Activated CD4-positive, alpha-beta T cell treated with anti-CD3 and anti-CD28 coated beads for 36 hours (primary cell): ENCODE measurements at regions of chr6 and their contacts with region 1.

Region 1: DNA sequence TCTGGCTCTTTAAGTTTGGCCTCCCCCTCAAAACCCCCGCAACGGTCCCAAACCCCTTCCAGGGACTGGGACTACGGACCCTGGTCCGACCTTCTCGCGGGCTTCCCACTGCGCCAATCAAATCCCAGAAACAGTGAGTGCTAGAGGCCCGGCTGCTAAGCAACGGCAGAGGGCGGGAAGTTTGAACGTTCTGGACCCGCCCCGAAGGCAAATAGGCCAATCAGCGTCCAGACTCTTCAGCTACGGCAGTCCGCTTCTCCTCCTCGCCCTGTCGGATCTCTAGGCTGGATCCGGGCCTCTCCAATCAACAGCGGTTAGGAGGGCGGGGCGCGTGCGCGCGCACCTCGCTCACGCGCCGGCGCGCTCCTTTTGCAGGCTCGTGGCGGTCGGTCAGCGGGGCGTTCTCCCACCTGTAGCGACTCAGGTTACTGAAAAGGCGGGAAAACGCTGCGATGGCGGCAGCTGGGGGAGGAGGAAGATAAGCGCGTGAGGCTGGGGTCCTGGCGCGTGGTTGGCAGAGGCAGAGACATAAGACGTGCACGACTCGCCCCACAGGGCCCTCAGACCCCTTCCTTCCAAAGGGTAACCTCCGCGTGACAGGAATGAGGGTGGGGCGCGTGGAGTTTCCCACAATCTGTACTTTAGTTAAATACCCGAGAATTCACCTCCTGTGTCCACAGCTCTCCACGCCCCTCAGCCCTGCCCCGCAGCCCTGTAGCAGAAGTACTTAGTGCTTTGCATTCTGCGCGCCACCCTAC is at the start of gene MSH5:
- DNase-seq: peak; percentile 98
- ATAC-seq: peak; percentile 87
- H3K4me3 Mint-ChIP-seq: peak within 1 kb of the TSS; percentile 96
- H3K27ac Mint-ChIP-seq: peak within 1 kb of the TSS; percentile 86
- H3K4me1 Mint-ChIP-seq: peaks cover 46% of the 10 kb centered on the region
- H3K27me3 Mint-ChIP-seq: no peaks in the 10 kb centered on the region
- total RNA-seq, gene MSH5: 92.1 to 126 TPM

Region 2: DNA sequence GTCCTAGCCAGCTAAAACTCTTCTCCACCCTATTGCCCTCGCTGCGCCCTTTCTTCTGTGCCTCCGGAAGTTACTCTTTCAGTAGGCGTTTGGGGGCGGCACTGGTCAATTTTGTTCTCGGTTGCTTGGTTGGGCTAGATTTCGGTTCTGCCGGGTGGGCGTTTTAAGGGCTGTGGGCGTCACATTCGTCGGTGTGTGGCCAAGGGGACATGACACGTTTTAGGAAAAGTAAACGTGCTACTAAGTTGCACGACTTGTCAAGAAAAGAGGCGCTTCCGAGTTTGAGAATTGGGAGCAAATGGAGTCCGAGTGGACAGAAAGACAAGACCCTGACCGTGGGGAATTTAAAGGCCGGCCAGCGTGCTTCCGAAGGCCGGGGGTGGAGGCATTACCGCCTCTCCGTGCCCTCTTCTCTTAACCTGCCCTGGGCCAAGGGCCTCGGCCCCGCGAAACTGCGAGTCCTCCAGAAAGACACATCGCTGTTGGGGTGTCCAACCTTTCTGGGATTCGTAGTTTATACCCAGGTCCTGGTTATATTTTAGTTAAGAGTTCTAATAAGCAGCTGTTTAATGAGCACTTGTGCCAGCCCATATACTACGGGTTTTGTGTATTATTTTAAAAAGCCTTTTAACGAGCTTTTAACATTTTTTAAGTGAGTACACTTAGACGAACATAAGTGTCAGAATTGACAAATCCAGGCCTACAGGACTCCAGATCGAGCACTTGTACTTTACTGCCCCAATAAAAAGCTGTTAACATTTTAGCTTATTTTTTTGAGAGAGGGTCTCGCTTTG is 86.7 kb before region 1 on chr6:
- CTCF ChIA-PET with region 1: interaction called, 4 read pairs
- POLR2A ChIA-PET with region 1: interaction called, 4 read pairs
- intact Hi-C with region 1: loop called in 1 of 2 experiments (anchors 1 kb)
- DNase-seq: peak; percentile 91
- ATAC-seq: peak; percentile 71
- H3K4me3 Mint-ChIP-seq: peak overlapping the region; percentile 88
- H3K27ac Mint-ChIP-seq: peak overlapping the region; percentile 96
- H3K4me1 Mint-ChIP-seq: peaks cover 38% of the 10 kb centered on the region
- H3K27me3 Mint-ChIP-seq: no peaks in the 10 kb centered on the region

Region 3: DNA sequence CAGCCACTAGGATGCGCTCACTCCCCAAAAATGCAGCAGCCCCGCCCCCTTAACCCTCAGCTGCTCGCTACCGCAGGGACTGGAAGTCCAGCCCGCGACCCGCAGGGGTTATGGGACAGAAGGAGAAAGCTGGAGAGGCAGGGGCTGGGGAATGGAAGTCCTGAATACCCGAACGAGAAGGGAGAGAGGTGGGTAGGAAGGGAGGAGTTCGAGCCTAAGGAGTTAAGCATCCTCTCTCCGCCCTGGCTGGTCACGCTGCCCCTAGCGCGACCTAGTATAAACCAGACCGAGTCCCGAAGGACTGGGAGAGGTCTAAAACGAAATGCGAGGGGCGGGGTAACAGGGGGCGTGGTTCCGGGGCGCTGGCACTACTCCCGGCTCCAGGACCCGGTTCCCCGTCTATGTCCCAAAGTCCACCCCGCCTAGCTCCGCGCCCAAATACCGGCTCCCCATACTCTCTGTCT is 10.3 kb before region 1 on chr6:
- CTCF ChIA-PET with region 1: interaction called, 6 read pairs
- POLR2A ChIA-PET with region 1: no interaction called
- intact Hi-C with region 1: loop called in 1 of 2 experiments (anchors 1 kb)
- DNase-seq: peak; percentile 86
- ATAC-seq: peak; percentile 59
- H3K4me3 Mint-ChIP-seq: peak overlapping the region; percentile 69
- H3K27ac Mint-ChIP-seq: peak overlapping the region; percentile 5
- H3K4me1 Mint-ChIP-seq: peaks cover 65% of the 10 kb centered on the region
- H3K27me3 Mint-ChIP-seq: no peaks in the 10 kb centered on the region

Region 4: DNA sequence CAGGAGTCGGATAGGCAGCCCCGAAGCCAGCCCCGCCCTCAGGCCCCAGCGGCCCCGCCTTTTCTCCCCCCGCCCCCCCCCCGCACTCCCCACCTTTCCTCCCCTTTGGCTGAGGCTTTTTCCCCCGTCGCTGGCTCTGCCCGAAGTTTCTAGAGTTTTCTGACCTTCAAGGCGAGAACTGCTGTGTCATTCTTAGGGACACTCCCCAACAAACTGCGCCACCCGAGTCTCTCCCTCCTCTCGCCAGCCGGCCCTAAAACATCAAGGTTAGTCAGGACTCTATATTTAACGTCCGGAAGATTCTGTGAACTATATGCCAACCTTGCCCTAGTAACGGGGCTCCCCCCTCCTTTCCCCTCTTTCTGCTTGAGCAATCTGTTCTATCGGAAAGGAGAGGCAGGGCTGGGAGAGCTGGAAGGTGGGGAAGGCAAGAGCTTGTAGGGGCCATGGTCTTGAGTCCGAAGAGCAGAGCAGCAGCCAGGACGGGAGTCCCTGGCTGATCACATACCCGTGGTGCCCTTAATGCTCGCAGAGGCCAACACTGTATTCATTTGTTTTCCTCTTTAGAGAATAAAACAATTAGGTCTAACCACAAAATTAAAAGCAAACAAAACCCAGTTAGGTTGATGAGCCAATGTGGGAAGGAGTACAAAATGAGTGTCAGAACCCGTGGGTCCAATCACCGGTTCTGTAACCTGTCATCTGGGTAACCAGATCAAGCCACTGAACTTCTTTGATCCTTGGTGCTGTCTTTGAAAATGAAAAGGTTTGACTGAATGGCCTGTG is 82.4 kb after region 1 on chr6:
- CTCF ChIA-PET with region 1: interaction called, 4 read pairs
- POLR2A ChIA-PET with region 1: interaction called, 10 read pairs
- intact Hi-C with region 1: loop called in 1 of 2 experiments (anchors 1 kb)
- DNase-seq: peak; percentile 79
- ATAC-seq: peak; percentile 54
- H3K4me3 Mint-ChIP-seq: peak overlapping the region; percentile 89
- H3K27ac Mint-ChIP-seq: peak overlapping the region; percentile 97
- H3K4me1 Mint-ChIP-seq: peaks cover 67% of the 10 kb centered on the region
- H3K27me3 Mint-ChIP-seq: no peaks in the 10 kb centered on the region

Region 5: GRCh38 chr6:31901953-31902643 is 162.3 kb after region 1 on chr6 and contains the start of gene ZBTB12:
- CTCF ChIA-PET with region 1: no interaction called
- POLR2A ChIA-PET with region 1: no interaction called
- intact Hi-C with region 1: loop called in 1 of 2 experiments (anchors 1 kb)
- DNase-seq: peak; percentile 92
- ATAC-seq: peak; percentile 63
- H3K4me3 Mint-ChIP-seq: peak within 1 kb of the TSS; percentile 69
- H3K27ac Mint-ChIP-seq: peak within 1 kb of the TSS; percentile 78
- H3K4me1 Mint-ChIP-seq: peaks cover 25% of the 10 kb centered on the region
- H3K27me3 Mint-ChIP-seq: no peaks in the 10 kb centered on the region
- total RNA-seq, gene ZBTB12: 1.9 to 2.4 TPM

Region 6: GRCh38 chr6:32355018-32355417 is 615.2 kb after region 1 on chr6:
- CTCF ChIA-PET with region 1: no interaction called
- POLR2A ChIA-PET with region 1: no interaction called
- intact Hi-C with region 1: no loop called
- DNase-seq: peak; percentile 23
- ATAC-seq: peak; percentile 64
- H3K4me3 Mint-ChIP-seq: no peak overlapping the region
- H3K27ac Mint-ChIP-seq: no peak overlapping the region
- H3K4me1 Mint-ChIP-seq: peaks cover 11% of the 10 kb centered on the region
- H3K27me3 Mint-ChIP-seq: peaks cover 7% of the 10 kb centered on the region

Region 7: DNA sequence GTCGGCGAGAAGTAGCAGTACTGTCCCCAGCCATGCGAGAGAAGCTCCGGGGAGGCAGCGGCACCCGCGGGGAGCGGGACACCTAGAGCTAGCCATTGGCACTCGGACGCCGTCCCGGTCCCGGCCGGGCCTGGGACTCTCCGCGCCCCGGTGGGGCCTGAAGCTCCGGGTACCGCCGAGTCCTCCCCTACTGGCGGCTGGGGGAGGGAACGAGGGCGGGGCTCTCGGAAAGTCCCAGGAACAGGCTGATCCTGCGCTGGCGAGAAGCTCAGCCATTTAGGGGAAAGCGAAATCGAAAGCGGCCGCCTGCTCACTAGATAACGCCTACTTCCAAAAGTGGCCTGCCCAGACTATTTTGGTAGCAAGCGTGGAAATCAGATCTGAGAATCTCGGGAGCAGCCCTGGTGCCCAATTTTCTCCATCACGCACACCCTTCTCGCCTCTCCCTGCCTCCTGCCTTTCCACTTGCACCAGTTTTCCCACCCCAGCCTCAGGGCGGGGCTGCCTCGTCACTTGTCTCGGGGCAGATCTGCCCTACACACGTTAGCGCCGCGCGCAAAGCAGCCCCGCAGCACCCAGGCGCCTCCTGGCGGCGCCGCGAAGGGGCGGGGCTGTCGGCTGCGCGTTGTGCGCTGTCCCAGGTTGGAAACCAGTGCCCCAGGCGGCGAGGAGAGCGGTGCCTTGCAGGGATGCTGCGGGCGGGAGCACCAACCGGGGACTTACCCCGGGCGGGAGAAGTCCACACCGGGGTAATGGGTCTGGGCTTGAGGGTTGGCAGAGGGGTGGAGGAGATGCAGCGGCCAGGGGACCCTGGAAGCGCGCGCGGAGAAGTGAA is 1113.9 kb after region 1 on chr6 and contains the starts of genes PSMB9 and TAP1:
- CTCF ChIA-PET with region 1: no interaction called
- POLR2A ChIA-PET with region 1: no interaction called
- intact Hi-C with region 1: loop called in 1 of 2 experiments (anchors 2 kb)
- DNase-seq: peak; percentile 98
- ATAC-seq: peak; percentile 84
- H3K4me3 Mint-ChIP-seq: peak within 1 kb of the TSS; percentile 100
- H3K27ac Mint-ChIP-seq: peak within 1 kb of the TSS; percentile 99
- H3K4me1 Mint-ChIP-seq: peaks cover 62% of the 10 kb centered on the region
- H3K27me3 Mint-ChIP-seq: no peaks in the 10 kb centered on the region
- total RNA-seq, gene PSMB9: 210 to 282 TPM
- total RNA-seq, gene TAP1: 191 to 255 TPM